OCI-LY7 (cell line): ENCODE measurements at regions of chr1 and their contacts with region 1.

Region 1: GRCh38 chr1:18373882-18374493 is 106.7 kb upstream of the KLHDC7A start:
- DNase-seq: peak; percentile 26
- H3K4me3 ChIP-seq: no peak overlapping the region
- H3K27ac ChIP-seq: no peak overlapping the region
- H3K4me1 ChIP-seq: no peaks in the 10 kb centered on the region
- CTCF ChIP-seq: peak; percentile 80

Region 2: DNA sequence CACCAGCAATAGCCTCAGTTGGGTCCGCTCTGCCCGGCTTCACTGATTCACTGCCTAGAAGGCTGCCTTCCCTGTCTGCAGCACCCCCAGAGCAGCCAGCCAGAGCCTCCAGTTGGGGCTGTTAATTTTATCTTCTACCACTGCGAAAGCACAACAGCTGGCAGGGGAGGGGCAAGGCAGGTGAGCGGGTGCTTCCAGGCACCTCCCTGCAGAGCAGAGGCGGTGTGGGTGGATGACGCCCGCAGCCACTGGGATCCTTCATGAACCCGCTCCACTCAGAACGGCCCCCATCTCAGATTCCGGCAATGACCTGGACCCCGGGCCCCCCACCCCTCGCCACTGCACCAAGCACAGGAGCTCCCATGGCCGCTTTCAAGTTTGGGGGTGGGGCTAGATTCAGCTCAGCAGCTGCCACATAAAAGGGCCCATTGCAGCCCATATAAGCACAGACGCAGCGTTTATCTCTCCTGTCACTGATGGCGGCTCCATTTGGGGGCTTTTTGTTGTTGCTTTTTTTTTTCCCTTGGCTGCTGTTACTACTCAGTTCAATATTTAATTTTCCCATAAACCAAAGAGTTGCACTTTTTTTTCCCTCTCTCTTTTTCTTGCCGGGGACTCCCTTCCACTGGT is 21.2 kb before region 1 on chr1:
- CTCF ChIA-PET with region 1: no interaction called
- POLR2A ChIA-PET with region 1: no interaction called
- intact Hi-C with region 1: no loop called
- DNase-seq: no peak
- H3K4me3 ChIP-seq: no peak overlapping the region
- H3K27ac ChIP-seq: no peak overlapping the region
- H3K4me1 ChIP-seq: no peaks in the 10 kb centered on the region
- CTCF ChIP-seq: no peak

Region 3: GRCh38 chr1:18575620-18576019 is 201.6 kb after region 1 on chr1:
- CTCF ChIA-PET with region 1: no interaction called
- POLR2A ChIA-PET with region 1: no interaction called
- intact Hi-C with region 1: loop called (anchors 1 kb)
- DNase-seq: peak; percentile 66
- H3K4me3 ChIP-seq: no peak overlapping the region
- H3K27ac ChIP-seq: no peak overlapping the region
- H3K4me1 ChIP-seq: peaks cover 22% of the 10 kb centered on the region
- CTCF ChIP-seq: peak; percentile 94